ENCODE measurements at regions of chr2 and their contacts with region 1.

Region 1: GRCh38 chr2:237774802-237775553 is 23.6 kb upstream of the RBM44 start:
- DNase-seq: peak; percentile 75
- H3K4me3 ChIP-seq: no peak overlapping the region; a peak in 1 of 4 replicates
- H3K27ac ChIP-seq: no peak overlapping the region; a peak in 1 of 4 replicates
- H3K4me1 ChIP-seq: no peaks in the 10 kb centered on the region; a peak in 1 of 4 replicates
- H3K27me3 ChIP-seq: no peaks in the 10 kb centered on the region
- CTCF ChIP-seq: peak; percentile 70
- EP300 ChIP-seq: no peak
- RAD21 ChIP-seq: peak; percentile 67

Region 2: GRCh38 chr2:237581751-237582746 is 192.9 kb before region 1 on chr2:
- CTCF ChIA-PET with region 1: interaction called, 13 read pairs
- POLR2A ChIA-PET with region 1: no interaction called
- DNase-seq: peak; percentile 69
- H3K4me3 ChIP-seq: no peak overlapping the region
- H3K27ac ChIP-seq: peak overlapping the region in 1 of 2 experiments; percentile 77; a peak in 1 of 4 replicates
- H3K4me1 ChIP-seq: peaks cover 0 to 21% of the 10 kb centered on the region in 2 experiments; a peak in 1 of 4 replicates
- H3K27me3 ChIP-seq: no peaks in the 10 kb centered on the region
- CTCF ChIP-seq: peak; percentile 61
- EP300 ChIP-seq: no peak
- RAD21 ChIP-seq: peak; percentile 77

Region 3: GRCh38 chr2:237760506-237761502 is 14.2 kb before region 1 on chr2:
- CTCF ChIA-PET with region 1: interaction called, 15 read pairs
- POLR2A ChIA-PET with region 1: no interaction called
- DNase-seq: no peak
- H3K4me3 ChIP-seq: no peak overlapping the region
- H3K27ac ChIP-seq: no peak overlapping the region
- H3K4me1 ChIP-seq: no peaks in the 10 kb centered on the region
- H3K27me3 ChIP-seq: no peaks in the 10 kb centered on the region
- CTCF ChIP-seq: no peak
- EP300 ChIP-seq: no peak
- RAD21 ChIP-seq: no peak

Region 4: DNA sequence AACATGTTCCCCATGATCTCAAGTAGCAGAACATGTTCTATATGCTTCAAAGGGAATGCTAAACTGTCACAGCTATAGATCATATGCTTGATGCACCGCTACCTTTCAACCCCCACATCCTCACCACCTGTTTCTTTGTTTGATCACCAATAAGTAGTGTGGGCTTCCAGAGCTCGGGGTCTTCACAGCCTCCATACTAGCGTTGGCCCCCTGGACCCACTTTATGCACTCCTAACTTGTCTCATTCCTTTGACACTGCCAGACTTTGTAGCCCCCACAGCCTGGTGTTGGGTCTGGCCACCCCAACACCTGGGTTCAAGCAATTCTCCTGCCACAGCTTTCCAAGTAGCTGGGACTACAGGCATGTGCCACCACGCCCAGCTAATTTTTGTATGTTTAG is 12.0 kb after region 1 on chr2:
- CTCF ChIA-PET with region 1: interaction called, 10 read pairs
- POLR2A ChIA-PET with region 1: no interaction called
- DNase-seq: no peak
- H3K4me3 ChIP-seq: no peak overlapping the region
- H3K27ac ChIP-seq: no peak overlapping the region
- H3K4me1 ChIP-seq: no peaks in the 10 kb centered on the region
- H3K27me3 ChIP-seq: no peaks in the 10 kb centered on the region
- CTCF ChIP-seq: no peak
- EP300 ChIP-seq: no peak
- RAD21 ChIP-seq: no peak